GM18951 (cell line): ENCODE measurements at regions of chr10 and their contacts with region 1.

Region 1: GRCh38 chr10:100433253-100434240 is 29.3 kb upstream of the WNT8B start:
- POLR2A ChIP-seq: no peak

Region 2: DNA sequence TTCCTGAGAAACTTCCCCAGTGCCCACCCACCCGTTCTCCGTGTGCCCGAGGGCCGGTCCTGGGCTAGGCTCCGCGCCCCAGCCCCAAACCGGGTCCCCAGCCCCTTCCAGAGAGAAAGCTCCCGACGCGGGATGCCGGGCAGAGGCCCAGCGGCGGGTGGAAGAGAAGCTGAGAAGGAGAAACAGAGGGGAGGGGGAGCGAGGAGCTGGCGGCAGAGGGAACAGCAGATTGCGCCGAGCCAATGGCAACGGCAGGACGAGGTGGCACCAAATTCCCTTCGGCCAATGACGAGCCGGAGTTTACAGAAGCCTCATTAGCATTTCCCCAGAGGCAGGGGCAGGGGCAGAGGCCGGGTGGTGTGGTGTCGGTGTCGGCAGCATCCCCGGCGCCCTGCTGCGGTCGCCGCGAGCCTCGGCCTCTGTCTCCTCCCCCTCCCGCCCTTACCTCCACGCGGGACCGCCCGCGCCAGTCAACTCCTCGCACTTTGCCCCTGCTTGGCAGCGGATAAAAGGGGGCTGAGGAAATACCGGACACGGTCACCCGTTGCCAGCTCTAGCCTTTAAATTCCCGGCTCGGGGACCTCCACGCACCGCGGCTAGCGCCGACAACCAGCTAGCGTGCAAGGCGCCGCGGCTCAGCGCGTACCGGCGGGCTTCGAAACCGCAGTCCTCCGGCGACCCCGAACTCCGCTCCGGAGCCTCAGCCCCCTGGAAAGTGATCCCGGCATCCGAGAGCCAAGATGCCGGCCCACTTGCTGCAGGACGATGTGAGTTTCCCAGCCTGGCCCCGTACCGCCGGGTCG is 86.6 kb before region 1 on chr10 and contains the start of gene SCD:
- in situ Hi-C with region 1: loop called (anchors 5 kb)
- POLR2A ChIP-seq: peak; percentile 83

Region 3: DNA sequence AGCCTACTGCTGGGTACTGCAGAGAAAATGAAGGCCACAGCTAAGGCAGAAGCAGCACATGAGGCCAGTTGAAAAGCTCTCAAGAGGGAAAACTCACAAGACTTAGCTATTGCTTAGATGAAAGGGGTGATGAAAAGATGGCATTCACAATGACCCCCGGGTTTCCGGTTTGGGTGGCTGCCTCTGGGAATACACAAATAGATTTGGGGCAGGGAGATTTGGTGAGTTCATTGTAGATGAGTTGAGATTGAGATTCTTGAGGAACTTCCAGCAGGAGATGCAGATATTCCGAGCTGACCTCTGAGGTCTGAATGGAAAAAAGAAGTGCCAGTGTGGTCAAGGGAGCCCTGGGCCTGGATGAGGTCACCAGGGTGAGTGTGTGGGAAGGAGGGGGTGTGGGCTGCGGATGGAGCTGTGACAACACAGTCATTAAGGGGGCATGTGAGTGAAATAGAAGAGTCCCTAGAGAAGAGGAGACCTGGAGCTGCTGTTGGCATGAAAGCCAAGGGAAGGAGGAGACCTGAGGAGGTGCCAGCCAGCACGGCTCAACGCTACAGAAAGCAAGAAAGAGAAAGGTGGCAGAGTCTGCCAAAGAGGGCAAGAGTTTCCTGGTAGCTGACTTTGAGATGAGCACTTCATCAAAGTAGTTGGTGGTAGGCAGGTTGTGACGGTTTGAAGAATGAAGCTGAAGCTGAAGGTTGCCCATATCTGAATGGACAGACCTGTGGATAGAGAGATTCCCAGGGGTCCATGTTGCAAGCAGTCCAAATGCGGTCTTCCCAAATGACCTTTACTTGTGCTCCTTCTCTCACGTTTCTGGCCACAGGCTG is 145.9 kb after region 1 on chr10:
- in situ Hi-C with region 1: no loop called
- POLR2A ChIP-seq: no peak

Region 4: GRCh38 chr10:100677290-100677945 is 243.9 kb after region 1 on chr10:
- in situ Hi-C with region 1: no loop called
- POLR2A ChIP-seq: no peak